Activated CD8-positive, alpha-beta T cell treated with anti-CD3 and anti-CD28 coated beads, Interleukin-2, amount 10 ng/mL, durations not matched to agents 7 days and 5 days (primary cell): ENCODE measurements at regions of chr13 and their contacts with region 1.

Region 1: DNA sequence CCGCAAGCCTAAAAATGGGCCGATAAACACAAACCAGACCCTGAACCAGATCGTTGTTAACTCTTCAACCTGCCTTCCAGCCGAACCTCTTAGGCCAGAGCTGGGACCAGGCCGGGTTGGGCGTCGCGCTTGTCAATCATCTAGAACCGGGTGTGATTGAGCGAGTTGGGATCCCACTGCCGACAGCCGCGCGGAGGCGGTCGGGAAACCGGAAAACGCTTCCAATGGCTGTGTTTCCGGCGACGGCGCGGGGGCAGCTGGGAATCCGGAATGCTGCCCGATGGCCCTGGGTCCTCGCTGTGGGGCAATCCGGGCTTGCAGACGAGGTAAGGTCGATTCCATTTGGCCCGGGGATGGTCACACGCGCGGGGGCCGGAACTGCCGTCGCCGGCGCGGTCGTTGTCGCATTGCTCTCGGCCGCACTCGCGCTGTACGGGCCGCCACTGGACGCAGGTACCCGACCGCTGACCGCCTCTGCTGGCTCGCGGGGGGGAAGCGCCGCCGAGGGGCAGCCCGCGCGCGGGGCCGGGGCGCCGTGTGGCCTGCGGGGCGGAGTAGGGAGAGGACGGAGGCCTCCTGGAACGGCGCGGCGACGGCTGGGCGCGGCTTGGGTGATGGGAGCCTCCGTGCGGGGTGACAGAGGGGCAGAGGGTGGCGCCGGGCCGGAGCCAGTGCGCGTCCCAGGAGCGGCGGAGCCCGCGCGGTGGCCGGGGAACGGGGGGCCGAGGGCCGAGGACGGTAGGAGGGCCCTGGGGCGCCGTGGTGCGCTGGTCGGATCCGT is at the start of gene NAXD:
- DNase-seq: peak; percentile 89
- ATAC-seq: peak; percentile 90
- H3K4me3 Mint-ChIP-seq: peak within 1 kb of the TSS; percentile 96
- H3K27ac Mint-ChIP-seq: peak within 1 kb of the TSS; percentile 95
- H3K4me1 Mint-ChIP-seq: peaks cover 29% of the 10 kb centered on the region
- H3K27me3 Mint-ChIP-seq: peaks cover 4% of the 10 kb centered on the region
- total RNA-seq, gene NAXD: 23.7 to 24.3 TPM

Region 2: DNA sequence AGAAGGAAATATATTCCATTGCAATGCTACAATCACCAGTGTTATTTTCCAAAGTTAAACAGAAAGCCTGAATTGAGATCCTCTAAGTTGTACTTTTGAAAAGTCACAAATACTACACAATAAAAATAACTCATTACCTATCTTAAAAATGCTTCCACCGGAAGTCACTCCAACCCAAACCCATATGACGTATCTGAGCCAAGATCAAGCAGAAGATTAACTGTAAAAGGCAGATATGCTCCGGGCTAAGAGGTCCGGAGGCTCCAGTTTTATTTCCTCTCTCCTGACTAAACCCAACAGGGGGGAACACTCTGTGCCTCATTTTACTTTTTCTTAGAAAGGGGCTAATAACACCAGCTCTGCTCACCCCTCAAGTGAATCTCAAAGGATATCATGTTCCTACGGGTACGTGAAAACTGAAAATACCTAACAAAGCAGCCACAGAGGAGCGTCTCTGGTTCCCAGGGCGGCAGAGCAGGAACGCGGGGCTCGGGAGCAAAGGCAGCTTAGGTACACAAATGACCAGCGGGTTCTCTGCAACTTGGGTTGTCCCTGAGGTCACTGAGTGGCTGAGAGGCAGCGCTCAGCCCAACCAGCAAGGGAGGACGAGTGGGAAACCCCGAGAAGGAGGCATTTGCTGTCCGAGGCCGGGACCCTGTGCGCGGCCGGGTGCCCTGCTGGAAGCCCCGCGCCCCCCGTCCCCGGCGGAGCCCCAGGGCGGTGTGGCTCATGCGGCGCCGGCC is 54.7 kb before region 1 on chr13:
- CTCF ChIA-PET with region 1: no interaction called
- POLR2A ChIA-PET with region 1: no interaction called
- DNase-seq: no peak
- ATAC-seq: peak; percentile 14
- H3K4me3 Mint-ChIP-seq: peak overlapping the region; percentile 80
- H3K27ac Mint-ChIP-seq: peak overlapping the region; percentile 40
- H3K4me1 Mint-ChIP-seq: peaks cover 34% of the 10 kb centered on the region
- H3K27me3 Mint-ChIP-seq: peaks cover 20% of the 10 kb centered on the region

Region 3: GRCh38 chr13:110715395-110716235 is 100.1 kb after region 1 on chr13:
- CTCF ChIA-PET with region 1: interaction called, 3 read pairs
- POLR2A ChIA-PET with region 1: interaction called, 22 read pairs
- DNase-seq: peak; percentile 98
- ATAC-seq: peak; percentile 68
- H3K4me3 Mint-ChIP-seq: peak overlapping the region; percentile 91
- H3K27ac Mint-ChIP-seq: peak overlapping the region; percentile 95
- H3K4me1 Mint-ChIP-seq: peaks cover 29% of the 10 kb centered on the region
- H3K27me3 Mint-ChIP-seq: no peaks in the 10 kb centered on the region